BJ (cell line): ENCODE measurements at regions of chr17 and their contacts with region 1.

Region 1: GRCh38 chr17:32006957-32007462 is at the start of gene LRRC37B:
- DNase-seq: peak; percentile 16
- H3K4me3 ChIP-seq: peak within 1 kb of the TSS; percentile 58
- H3K27me3 ChIP-seq: no peaks in the 10 kb centered on the region
- CTCF ChIP-seq: peak; percentile 78
- polyA plus RNA-seq, gene LRRC37B: 8.6 and 11.4 TPM in 2 replicates

Region 2: DNA sequence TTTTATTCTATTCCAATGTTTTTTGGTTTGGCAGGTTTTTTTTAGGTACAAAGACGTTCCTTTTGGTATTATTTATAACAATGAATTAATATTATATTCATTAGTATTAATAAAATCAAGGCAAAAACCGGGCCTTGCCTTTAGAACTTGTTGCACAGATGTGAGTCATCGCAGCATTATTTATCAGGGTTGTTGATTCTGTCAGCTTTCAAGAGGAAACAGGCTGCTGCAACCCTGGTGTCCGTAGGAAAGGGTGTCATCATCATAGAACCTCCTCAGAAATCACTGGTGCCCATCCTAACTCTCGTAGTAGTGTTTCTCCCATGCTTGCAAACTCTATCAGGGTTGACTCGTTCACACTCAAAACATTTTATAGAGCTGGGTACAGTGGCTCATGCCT is 10.0 kb before region 1 on chr17:
- CTCF ChIA-PET with region 1: interaction called, 10 read pairs
- POLR2A ChIA-PET with region 1: no interaction called
- DNase-seq: no peak
- H3K4me3 ChIP-seq: no peak overlapping the region
- H3K27me3 ChIP-seq: no peaks in the 10 kb centered on the region
- CTCF ChIP-seq: no peak

Region 3: DNA sequence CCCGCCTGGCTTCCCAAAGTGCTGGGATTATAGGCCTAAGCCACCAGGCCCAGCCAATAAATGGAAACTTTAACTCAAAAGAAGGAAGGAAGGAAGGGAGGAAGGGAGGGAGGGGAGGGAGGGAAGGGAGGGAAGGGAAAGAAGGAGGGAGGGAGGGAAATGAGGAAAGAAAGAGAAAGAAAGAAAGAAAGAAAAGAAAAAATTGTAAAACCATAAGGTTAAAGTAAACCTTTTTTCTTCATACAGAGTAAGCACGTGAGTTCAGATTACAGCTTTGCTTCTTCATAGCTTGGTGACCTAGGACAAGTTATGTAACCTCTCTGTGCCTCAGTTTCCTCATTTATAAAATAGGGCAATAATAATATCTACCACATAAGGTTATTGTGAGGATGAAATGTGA is 26.2 kb after region 1 on chr17:
- CTCF ChIA-PET with region 1: no interaction called
- POLR2A ChIA-PET with region 1: no interaction called
- DNase-seq: no peak
- H3K4me3 ChIP-seq: no peak overlapping the region
- H3K27me3 ChIP-seq: no peaks in the 10 kb centered on the region
- CTCF ChIP-seq: no peak

Region 4: GRCh38 chr17:32136856-32137255 is 129.8 kb after region 1 on chr17:
- CTCF ChIA-PET with region 1: interaction called, 28 read pairs
- POLR2A ChIA-PET with region 1: no interaction called
- DNase-seq: no peak
- H3K4me3 ChIP-seq: no peak overlapping the region
- H3K27me3 ChIP-seq: no peaks in the 10 kb centered on the region
- CTCF ChIP-seq: no peak

Region 5: GRCh38 chr17:32142038-32142856 is 135.2 kb after region 1 on chr17 and contains the start of gene RHOT1:
- CTCF ChIA-PET with region 1: interaction called, 28 read pairs
- POLR2A ChIA-PET with region 1: no interaction called
- DNase-seq: no peak
- H3K4me3 ChIP-seq: peak within 1 kb of the TSS; percentile 75
- H3K27me3 ChIP-seq: no peaks in the 10 kb centered on the region
- CTCF ChIP-seq: peak; percentile 67
- polyA plus RNA-seq, gene RHOT1: 27.4 and 46.3 TPM in 2 replicates